SK-N-SH (cell line): ENCODE measurements at regions of chr19 and their contacts with region 1.

Region 1: DNA sequence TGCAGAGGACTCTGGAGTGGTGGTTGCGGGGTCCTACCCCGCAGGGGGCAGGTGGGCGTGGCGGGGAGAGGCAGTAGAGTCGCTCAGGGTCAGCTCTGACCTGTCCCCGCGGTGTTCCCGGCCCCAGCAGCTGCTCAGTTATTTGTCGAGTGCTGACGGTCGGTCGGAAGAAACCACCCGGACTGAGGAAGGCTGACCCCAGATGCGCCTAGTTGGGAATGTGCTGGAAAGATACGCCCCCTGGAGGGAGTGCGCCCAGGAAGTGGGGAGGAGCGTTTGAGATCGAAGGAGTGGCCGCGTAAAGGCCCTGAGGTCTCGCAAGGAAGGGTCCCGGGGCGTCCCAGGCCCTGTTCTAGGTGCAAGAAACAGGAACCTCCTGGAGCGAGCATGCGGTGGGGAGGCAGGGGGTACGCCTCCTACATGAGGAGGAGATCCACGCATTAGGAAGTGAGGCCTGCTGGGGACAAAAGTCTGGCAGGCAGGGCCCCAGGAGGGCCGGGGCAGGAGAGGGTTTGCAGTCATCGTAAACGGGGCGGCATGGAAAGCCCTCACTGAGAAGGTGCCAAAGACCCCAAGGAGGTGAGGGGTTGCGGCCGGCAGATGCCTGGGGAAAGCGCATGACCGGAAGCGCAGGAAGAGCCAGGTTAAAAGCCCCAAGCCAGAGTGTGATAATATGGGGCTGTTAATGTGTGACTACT is 9.2 kb downstream of the CCDC8 start:
- DNase-seq: no peak
- H3K4me3 ChIP-seq: no peak overlapping the region
- H3K27ac ChIP-seq: no peak overlapping the region
- H3K4me1 ChIP-seq: no peaks in the 10 kb centered on the region
- H3K27me3 ChIP-seq: no peaks in the 10 kb centered on the region
- CTCF ChIP-seq: no peak
- EP300 ChIP-seq: no peak
- RAD21 ChIP-seq: no peak

Region 2: GRCh38 chr19:46435009-46435408 is 30.8 kb after region 1 on chr19:
- CTCF ChIA-PET with region 1: no interaction called
- POLR2A ChIA-PET with region 1: no interaction called
- DNase-seq: no peak
- H3K4me3 ChIP-seq: no peak overlapping the region
- H3K27ac ChIP-seq: no peak overlapping the region
- H3K4me1 ChIP-seq: no peaks in the 10 kb centered on the region
- H3K27me3 ChIP-seq: no peaks in the 10 kb centered on the region
- CTCF ChIP-seq: no peak
- EP300 ChIP-seq: no peak
- RAD21 ChIP-seq: no peak

Region 3: GRCh38 chr19:46495787-46496101 is 91.5 kb after region 1 on chr19 and contains the start of gene PNMA8B:
- CTCF ChIA-PET with region 1: interaction called, 463 read pairs
- POLR2A ChIA-PET with region 1: no interaction called
- DNase-seq: peak; percentile 99
- H3K4me3 ChIP-seq: peak within 1 kb of the TSS; percentile 57 to 59
- H3K27ac ChIP-seq: peak within 1 kb of the TSS in 1 of 2 experiments; percentile 59; a peak in 1 of 4 replicates
- H3K4me1 ChIP-seq: peaks cover 0 to 16% of the 10 kb centered on the region in 2 experiments; a peak in 1 of 4 replicates
- H3K27me3 ChIP-seq: no peaks in the 10 kb centered on the region
- CTCF ChIP-seq: no peak
- EP300 ChIP-seq: no peak
- RAD21 ChIP-seq: no peak
- polyA plus RNA-seq, gene PNMA8B: 0.63 and 0.92 TPM in 2 replicates

Region 4: DNA sequence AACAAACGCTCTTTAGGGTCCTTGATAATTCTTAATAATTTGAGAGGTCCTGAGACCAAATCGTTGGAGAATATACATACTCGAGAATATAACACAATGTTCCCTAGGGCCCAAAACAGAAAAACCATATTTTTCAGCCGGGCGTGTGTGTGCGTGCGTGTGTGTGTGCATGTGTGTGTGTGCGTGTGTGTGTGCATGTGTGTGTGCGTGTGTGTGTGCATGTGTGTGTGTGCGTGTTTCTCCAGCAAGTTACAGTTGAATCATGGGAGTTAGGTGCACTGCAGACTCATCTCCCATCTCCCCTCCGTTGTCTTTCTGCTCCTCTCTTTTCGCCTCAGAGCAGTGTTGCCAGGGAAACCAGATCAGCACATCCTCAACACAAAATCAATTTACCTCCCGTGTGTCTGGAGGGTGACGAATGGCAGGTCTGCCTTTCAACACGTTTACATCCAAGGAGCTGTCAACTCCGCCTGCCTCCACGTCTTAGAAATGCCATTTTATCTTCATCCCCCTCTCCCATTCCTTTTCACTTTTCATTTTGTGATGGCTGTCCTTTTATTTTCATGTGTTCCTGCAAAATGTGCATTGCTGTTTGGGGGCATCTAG is 99.7 kb after region 1 on chr19:
- CTCF ChIA-PET with region 1: interaction called, 15 read pairs
- POLR2A ChIA-PET with region 1: no interaction called
- DNase-seq: peak; percentile 74
- H3K4me3 ChIP-seq: no peak overlapping the region
- H3K27ac ChIP-seq: no peak overlapping the region
- H3K4me1 ChIP-seq: peaks cover 0 to 4% of the 10 kb centered on the region in 2 experiments; a peak in 1 of 4 replicates
- H3K27me3 ChIP-seq: no peaks in the 10 kb centered on the region
- CTCF ChIP-seq: no peak
- EP300 ChIP-seq: no peak
- RAD21 ChIP-seq: no peak